ENCODE measurements at regions of chr9 and their contacts with region 1.

Region 1: GRCh38 chr9:126791406-126792151 is 13.3 kb upstream of the ZBTB43 start:
- DNase-seq: peak; percentile 87 to 90
- ATAC-seq: peak; percentile 89 to 90
- H3K4me3 ChIP-seq: no peak overlapping the region
- H3K27ac ChIP-seq: peak overlapping the region; percentile 75 to 90
- H3K4me1 ChIP-seq: peaks cover 59% of the 10 kb centered on the region
- CTCF ChIP-seq: no peak
- EP300 ChIP-seq: peak; percentile 70 to 87; a peak in 2 of 5 replicates
- POLR2A ChIP-seq: no peak
- RAD21 ChIP-seq: no peak; a peak in 1 of 5 replicates

Region 2: DNA sequence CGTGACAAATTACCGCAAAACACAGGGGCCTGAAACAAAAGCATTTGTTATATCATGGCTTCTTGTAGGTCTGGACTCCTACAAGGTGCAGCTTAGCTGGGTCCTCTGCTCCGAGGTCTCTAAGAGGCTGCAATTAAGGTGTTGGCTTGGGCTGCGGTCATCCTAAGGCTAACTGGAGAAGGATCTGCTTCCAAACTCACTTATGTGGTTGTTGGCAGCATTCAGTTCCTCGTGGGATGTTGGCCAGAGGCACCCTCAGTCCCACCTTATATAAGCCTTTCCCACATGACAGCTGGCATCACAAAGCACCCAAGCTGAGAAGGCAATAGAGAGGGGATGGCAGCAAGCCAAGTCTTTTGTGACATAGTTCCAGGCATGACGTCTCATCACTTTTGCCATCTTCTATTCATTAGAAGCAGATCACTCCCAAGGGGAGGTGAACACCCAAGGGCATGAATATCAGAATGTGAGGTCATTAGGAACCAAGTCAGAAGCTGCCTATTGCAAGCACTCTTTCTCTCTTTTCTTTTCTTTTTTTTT is 34.6 kb before region 1 on chr9:
- CTCF ChIA-PET with region 1: no interaction called
- POLR2A ChIA-PET with region 1: no interaction called
- DNase-seq: no peak
- ATAC-seq: no peak
- H3K4me3 ChIP-seq: no peak overlapping the region
- H3K27ac ChIP-seq: no peak overlapping the region
- H3K4me1 ChIP-seq: no peaks in the 10 kb centered on the region
- CTCF ChIP-seq: no peak
- EP300 ChIP-seq: no peak
- POLR2A ChIP-seq: no peak
- RAD21 ChIP-seq: no peak

Region 3: DNA sequence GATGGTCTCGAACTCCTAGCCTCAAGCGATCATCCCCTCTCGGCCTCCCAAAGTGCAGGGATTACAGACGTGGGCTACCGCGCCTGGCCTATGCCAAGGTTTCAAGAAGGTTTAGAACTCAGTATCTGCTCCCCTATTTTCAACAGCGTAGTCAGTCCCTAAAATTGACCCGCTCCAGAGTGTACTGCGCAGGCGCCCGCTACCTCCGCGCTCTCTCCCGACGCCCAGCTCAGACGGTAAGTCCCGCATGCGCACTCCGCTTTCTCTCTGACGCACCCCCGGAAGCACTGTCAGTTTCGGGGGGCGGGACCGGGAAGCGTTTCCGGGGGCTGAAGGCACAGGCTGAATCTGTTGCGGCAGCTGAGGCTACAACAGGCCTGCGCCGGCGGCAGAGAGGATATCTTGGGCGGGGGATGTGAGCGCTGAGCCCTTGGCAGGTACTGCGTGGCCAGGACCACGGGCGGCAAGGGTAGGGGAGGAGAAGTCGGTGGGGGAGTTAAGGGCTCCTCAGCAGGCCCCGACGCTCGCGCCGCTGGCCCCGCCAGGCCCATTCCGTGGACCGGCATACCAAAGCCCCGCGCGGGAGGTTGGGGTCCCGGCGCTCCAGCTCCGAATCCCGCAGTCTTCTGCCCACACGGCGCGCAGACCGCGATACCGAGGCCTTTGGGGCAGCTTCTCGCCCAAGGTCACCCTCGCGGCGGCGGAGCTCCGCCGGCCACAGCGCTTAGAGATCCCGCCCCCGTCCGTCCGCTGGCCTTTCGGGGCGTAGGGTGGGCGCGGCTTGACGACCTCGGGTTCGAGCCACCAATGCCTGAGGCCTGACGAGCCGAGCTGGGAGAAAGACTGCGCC is 13.3 kb after region 1 on chr9 and contains the start of gene ZBTB43:
- CTCF ChIA-PET with region 1: interaction called, 5 read pairs
- POLR2A ChIA-PET with region 1: interaction called, 17 read pairs
- DNase-seq: peak; percentile 95 to 98
- ATAC-seq: peak; percentile 97
- H3K4me3 ChIP-seq: peak within 1 kb of the TSS; percentile 73
- H3K27ac ChIP-seq: peak within 1 kb of the TSS; percentile 76 to 94
- H3K4me1 ChIP-seq: peaks cover 28% of the 10 kb centered on the region
- CTCF ChIP-seq: no peak
- EP300 ChIP-seq: no peak
- POLR2A ChIP-seq: 0 out of 2 replicates have a peak, but pooled peaks have one; percentile 63
- RAD21 ChIP-seq: no peak
- polyA plus RNA-seq, gene ZBTB43: 9.9 and 11.7 TPM in 2 replicates

Measured in A549 (cell line).